ENCODE measurements at regions of chr11 and their contacts with region 1.

Region 1: GRCh38 chr11:132278801-132279574 is 908.6 kb downstream of the NTM start:
- DNase-seq: peak; percentile 4
- ATAC-seq: peak; percentile 90
- H3K4me3 ChIP-seq: no peak overlapping the region
- H3K27ac ChIP-seq: no peak overlapping the region
- H3K4me1 ChIP-seq: no peaks in the 10 kb centered on the region
- H3K27me3 ChIP-seq: no peaks in the 10 kb centered on the region
- CTCF ChIP-seq: peak; percentile 60 to 71 (median 64)
- EP300 ChIP-seq: no peak
- POLR2A ChIP-seq: no peak
- RAD21 ChIP-seq: peak; percentile 89

Region 2: GRCh38 chr11:131889146-131889577 is 389.8 kb before region 1 on chr11:
- CTCF ChIA-PET with region 1: no interaction called
- POLR2A ChIA-PET with region 1: no interaction called
- RAD21 ChIA-PET with region 1: no interaction called
- SMC1A ChIA-PET with region 1: no interaction called
- in situ Hi-C with region 1: no loop called
- intact Hi-C with region 1: no loop called
- DNase-seq: peak; percentile 66
- ATAC-seq: peak; percentile 82
- H3K4me3 ChIP-seq: no peak overlapping the region
- H3K27ac ChIP-seq: no peak overlapping the region
- H3K4me1 ChIP-seq: peaks cover 52% of the 10 kb centered on the region
- H3K27me3 ChIP-seq: no peaks in the 10 kb centered on the region
- CTCF ChIP-seq: no peak
- EP300 ChIP-seq: peak; percentile 21 to 77; a peak in 2 of 4 replicates
- POLR2A ChIP-seq: no peak
- RAD21 ChIP-seq: no peak

Region 3: DNA sequence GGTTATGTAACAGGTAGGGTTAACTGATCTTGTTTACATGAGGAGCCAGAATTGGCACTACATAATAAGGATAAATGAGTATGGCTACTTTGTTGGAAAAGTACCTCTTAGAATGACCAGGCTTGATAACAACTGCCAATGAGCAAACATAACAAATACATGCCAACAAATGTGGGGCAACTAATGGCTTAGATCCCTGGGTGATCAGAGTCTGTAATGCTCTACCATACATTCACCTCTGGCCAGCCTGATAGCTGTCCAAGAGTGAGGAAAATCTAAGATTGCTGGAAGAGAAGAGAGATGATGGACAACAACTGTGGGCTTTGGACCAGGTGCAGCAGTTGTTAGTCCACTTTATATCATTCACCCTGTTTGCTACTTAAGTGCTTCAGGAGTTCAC is 116.4 kb after region 1 on chr11:
- CTCF ChIA-PET with region 1: interaction called, 7 read pairs
- POLR2A ChIA-PET with region 1: no interaction called
- RAD21 ChIA-PET with region 1: no interaction called
- SMC1A ChIA-PET with region 1: interaction called, 10 read pairs
- in situ Hi-C with region 1: loop called (anchors 10 kb)
- intact Hi-C with region 1: no loop called
- DNase-seq: no peak
- ATAC-seq: no peak
- H3K4me3 ChIP-seq: no peak overlapping the region
- H3K27ac ChIP-seq: no peak overlapping the region
- H3K4me1 ChIP-seq: no peaks in the 10 kb centered on the region
- H3K27me3 ChIP-seq: no peaks in the 10 kb centered on the region
- CTCF ChIP-seq: no peak
- EP300 ChIP-seq: no peak
- POLR2A ChIP-seq: no peak
- RAD21 ChIP-seq: no peak

Measured in GM12878 (cell line).